ENCODE measurements at regions of chr7 and their contacts with region 1.

Region 1: GRCh38 chr7:27961255-27961654 is 219.3 kb downstream of the JAZF1 start:
- DNase-seq: no peak
- ATAC-seq: no peak
- H3K4me3 ChIP-seq: no peak overlapping the region
- H3K4me3 Mint-ChIP-seq: no peak overlapping the region
- H3K27ac ChIP-seq: no peak overlapping the region
- H3K27ac Mint-ChIP-seq: peak overlapping the region; percentile 43 to 61
- H3K4me1 ChIP-seq: no peaks in the 10 kb centered on the region
- H3K4me1 Mint-ChIP-seq: peaks cover 75 to 76% of the 10 kb centered on the region in 2 donors
- H3K27me3 ChIP-seq: no peaks in the 10 kb centered on the region
- H3K27me3 Mint-ChIP-seq: no peaks in the 10 kb centered on the region
- CTCF ChIP-seq: no peak

Region 2: GRCh38 chr7:27910326-27910725 is 50.9 kb before region 1 on chr7:
- intact Hi-C with region 1: loop called (anchors 5 kb)
- DNase-seq: no peak
- ATAC-seq: no peak
- H3K4me3 ChIP-seq: no peak overlapping the region
- H3K4me3 Mint-ChIP-seq: no peak overlapping the region
- H3K27ac ChIP-seq: no peak overlapping the region
- H3K27ac Mint-ChIP-seq: no peak overlapping the region
- H3K4me1 ChIP-seq: peaks cover 2% of the 10 kb centered on the region
- H3K4me1 Mint-ChIP-seq: peaks cover 33 to 45% of the 10 kb centered on the region in 2 donors
- H3K27me3 ChIP-seq: no peaks in the 10 kb centered on the region
- H3K27me3 Mint-ChIP-seq: no peaks in the 10 kb centered on the region
- CTCF ChIP-seq: no peak

Region 3: DNA sequence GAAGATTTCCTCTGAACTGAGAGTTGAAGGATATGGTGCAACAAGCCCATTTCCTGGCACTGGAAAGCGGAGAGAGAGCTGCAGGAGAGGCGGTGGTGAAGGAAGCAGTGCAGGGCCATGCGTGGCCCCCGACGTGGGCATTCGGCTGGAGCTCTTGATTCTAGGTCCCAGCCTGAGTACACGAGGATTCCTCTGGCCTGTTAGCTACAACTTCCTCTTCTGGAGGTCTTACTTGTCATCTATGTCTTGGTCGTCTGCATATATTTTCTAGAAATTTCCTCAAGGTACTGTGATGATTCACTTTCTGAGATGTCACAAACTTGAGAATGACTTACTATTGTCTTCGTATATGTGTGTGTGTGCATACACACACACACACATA is 278.6 kb after region 1 on chr7:
- intact Hi-C with region 1: no loop called
- DNase-seq: peak in 1 of 2 donors; percentile 2
- ATAC-seq: peak; percentile 24 to 66 (median 36)
- H3K4me3 ChIP-seq: no peak overlapping the region
- H3K4me3 Mint-ChIP-seq: no peak overlapping the region
- H3K27ac ChIP-seq: no peak overlapping the region
- H3K27ac Mint-ChIP-seq: peak overlapping the region in 1 of 2 donors; percentile 64
- H3K4me1 ChIP-seq: peaks cover 3% of the 10 kb centered on the region
- H3K4me1 Mint-ChIP-seq: peaks cover 12 to 17% of the 10 kb centered on the region in 2 donors
- H3K27me3 ChIP-seq: no peaks in the 10 kb centered on the region
- H3K27me3 Mint-ChIP-seq: no peaks in the 10 kb centered on the region
- CTCF ChIP-seq: no peak

Region 4: GRCh38 chr7:28768628-28769027 is 807.4 kb after region 1 on chr7:
- intact Hi-C with region 1: no loop called
- DNase-seq: no peak
- ATAC-seq: no peak
- H3K4me3 ChIP-seq: no peak overlapping the region
- H3K4me3 Mint-ChIP-seq: no peak overlapping the region
- H3K27ac ChIP-seq: no peak overlapping the region
- H3K27ac Mint-ChIP-seq: no peak overlapping the region
- H3K4me1 ChIP-seq: no peaks in the 10 kb centered on the region
- H3K4me1 Mint-ChIP-seq: no peaks in the 10 kb centered on the region
- H3K27me3 ChIP-seq: no peaks in the 10 kb centered on the region
- H3K27me3 Mint-ChIP-seq: peaks cover 10 to 55% of the 10 kb centered on the region in 2 donors
- CTCF ChIP-seq: no peak

Measured in natural killer cell (primary cell).